Transverse colon (tissue), 4 donors: ENCODE measurements at regions of chr3 and their contacts with region 1.

Region 1: DNA sequence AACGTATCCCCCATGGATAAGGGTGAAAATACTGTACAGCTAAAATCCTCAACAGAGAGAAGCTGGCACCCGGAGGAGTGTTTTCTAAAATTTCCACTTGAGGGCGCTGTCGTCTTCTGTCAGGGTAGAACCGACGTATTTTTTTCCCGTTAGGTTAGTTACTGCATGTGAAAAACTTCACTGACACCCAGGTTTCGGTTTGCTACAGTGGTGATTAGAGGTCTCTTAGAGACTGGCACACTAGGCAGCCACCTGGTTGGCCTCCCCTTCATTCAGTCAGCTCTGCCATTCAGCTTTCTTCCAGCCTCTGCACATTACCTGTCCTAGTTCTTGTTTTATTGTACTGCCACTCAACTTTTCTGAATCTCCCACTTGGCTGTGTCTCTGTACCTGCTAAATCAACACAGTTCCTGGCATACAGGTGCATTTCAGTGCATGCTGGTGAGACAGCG is 18.4 kb downstream of the CCK start:
- DNase-seq: peak; percentile 55
- H3K4me3 ChIP-seq: no peak overlapping the region
- H3K27ac ChIP-seq: no peak overlapping the region
- H3K4me1 ChIP-seq: peaks cover 0 to 6% (median 0%) of the 10 kb centered on the region in 4 donors
- H3K27me3 ChIP-seq: peaks cover 26% of the 10 kb centered on the region
- CTCF ChIP-seq: peak; percentile 60 to 74 (median 68)
- EP300 ChIP-seq: no peak
- POLR2A ChIP-seq: no peak

Region 2: GRCh38 chr3:40989147-40990066 is 1258.2 kb before region 1 on chr3:
- in situ Hi-C with region 1: no loop called
- intact Hi-C with region 1: no loop called
- DNase-seq: no peak
- H3K4me3 ChIP-seq: no peak overlapping the region
- H3K27ac ChIP-seq: no peak overlapping the region
- H3K4me1 ChIP-seq: no peaks in the 10 kb centered on the region
- H3K27me3 ChIP-seq: no peaks in the 10 kb centered on the region
- CTCF ChIP-seq: no peak
- EP300 ChIP-seq: no peak
- POLR2A ChIP-seq: no peak

Region 3: DNA sequence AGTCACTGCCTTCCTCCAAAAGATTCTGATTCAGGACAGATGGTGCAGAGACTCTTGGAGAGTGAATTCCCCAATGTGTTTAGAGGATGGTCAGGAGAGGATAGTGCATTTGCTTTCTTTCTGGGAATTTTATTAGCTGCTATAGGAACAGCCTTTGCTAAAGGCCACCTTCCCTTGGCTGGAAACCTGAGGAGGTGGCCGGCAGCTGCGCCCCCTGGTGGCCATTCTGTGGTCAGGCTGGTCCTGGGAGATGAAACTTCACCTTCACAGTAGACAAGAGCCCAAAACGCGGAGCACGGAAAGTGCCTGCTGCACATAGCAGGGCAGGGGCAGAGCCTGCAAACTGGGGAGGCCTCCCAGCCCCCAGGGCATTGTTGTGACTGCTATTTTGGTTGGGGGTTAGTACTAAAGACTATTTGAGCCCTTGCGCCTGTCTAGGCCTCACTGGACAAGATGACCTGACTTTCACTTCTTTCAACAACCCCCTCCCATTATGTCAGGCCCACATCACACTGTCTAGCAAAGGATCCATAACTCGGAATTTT is 299.9 kb after region 1 on chr3:
- in situ Hi-C with region 1: loop called in 2 of 4 experiments (anchors 25 kb)
- intact Hi-C with region 1: no loop called
- DNase-seq: peak; percentile 77
- H3K4me3 ChIP-seq: no peak overlapping the region
- H3K27ac ChIP-seq: no peak overlapping the region
- H3K4me1 ChIP-seq: peaks cover 15 to 31% (median 16%) of the 10 kb centered on the region in 4 donors
- H3K27me3 ChIP-seq: no peaks in the 10 kb centered on the region
- CTCF ChIP-seq: peak; percentile 89 to 97 (median 96)
- EP300 ChIP-seq: no peak
- POLR2A ChIP-seq: no peak

Region 4: DNA sequence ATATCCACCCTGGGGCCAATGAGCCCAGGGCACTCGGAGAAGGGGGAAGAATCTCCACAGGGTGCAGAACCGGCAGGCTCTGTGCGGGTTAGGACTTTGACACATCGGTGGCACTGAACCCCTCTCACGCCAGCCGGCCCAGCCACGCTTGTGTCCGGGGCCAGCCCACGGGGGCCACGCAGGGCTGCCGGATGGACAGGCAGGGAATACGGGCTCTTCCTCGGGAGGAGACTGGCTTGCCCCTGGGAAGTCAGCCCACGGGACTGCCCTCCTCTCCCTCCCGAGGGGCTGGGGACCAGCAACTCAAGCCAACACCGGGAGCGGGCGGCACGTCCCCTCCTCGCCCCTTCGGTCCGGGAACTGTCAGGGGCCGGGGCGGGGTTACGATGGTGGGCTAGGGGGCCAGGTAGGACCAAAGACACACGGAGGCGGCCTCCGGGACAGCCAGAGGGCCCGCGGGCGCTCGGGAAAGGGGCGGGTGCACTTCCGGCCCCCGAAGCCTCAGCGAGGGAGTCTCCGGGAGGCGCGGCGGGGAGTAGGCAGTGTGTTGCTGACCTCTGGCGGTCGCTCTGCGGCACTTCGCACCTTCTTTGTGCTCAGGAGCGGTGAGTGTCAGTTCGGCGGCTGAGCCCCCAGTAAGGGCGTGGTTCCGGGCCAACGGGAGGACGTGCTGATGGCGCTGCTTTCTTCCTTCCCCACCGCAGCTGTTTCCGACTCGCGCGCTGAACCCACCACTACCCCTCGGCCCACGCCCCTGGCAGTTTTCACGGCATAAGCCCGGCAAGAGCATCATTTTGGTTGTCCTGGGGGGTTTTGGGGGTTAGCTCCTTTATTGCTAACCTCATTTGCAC is 633.2 kb after region 1 on chr3:
- in situ Hi-C with region 1: loop called in 1 of 4 experiments (anchors 25 kb)
- intact Hi-C with region 1: no loop called
- DNase-seq: peak; percentile 88
- H3K4me3 ChIP-seq: peak overlapping the region; percentile 44 to 89 (median 56)
- H3K27ac ChIP-seq: peak overlapping the region; percentile 49 to 72 (median 64)
- H3K4me1 ChIP-seq: peaks cover 3 to 10% (median 7%) of the 10 kb centered on the region in 4 donors
- H3K27me3 ChIP-seq: no peaks in the 10 kb centered on the region
- CTCF ChIP-seq: peak; percentile 90 to 92 (median 91)
- EP300 ChIP-seq: no peak
- POLR2A ChIP-seq: peak; percentile 38